WTC11 (cell line): ENCODE measurements at regions of chr2 and their contacts with region 1.

Region 1: DNA sequence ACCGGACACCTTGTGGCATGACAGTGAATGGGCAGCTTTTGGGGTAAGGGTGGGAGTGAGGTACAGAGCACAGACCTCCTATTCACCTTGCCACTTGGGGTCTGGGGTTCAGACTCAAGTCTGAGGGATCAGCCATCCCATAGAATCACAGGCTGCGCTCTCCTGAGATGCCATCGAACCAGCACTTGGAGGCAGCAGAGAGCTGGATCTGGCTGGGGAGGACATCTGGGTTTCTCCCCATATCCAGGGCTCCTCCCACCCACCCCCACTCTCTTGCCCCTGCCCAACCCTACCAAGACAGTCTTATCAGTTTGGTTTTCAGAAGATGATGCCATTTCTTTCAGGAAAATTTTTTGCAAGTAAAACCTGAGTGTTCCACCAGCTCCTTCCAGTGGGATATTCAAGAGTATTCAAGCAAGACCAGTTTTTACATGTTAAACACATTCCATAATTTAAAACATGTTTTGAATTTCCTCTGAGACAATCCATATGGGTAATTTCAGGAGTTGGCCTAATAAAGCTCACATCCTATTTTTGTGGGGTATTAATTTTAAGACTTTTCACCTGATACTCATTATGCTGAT is 29.2 kb upstream of the TEX44 start:
- DNase-seq: peak; percentile 82
- ATAC-seq: peak; percentile 99
- H3K4me3 Mint-ChIP-seq: no peak overlapping the region
- H3K27ac Mint-ChIP-seq: peak overlapping the region; percentile 66; the same call in 1 of the 2 replicates
- H3K4me1 Mint-ChIP-seq: peaks cover 11% of the 10 kb centered on the region
- H3K27me3 Mint-ChIP-seq: no peaks in the 10 kb centered on the region
- CTCF ChIP-seq: peak; percentile 54; the same call in 1 of the 2 replicates

Region 2: DNA sequence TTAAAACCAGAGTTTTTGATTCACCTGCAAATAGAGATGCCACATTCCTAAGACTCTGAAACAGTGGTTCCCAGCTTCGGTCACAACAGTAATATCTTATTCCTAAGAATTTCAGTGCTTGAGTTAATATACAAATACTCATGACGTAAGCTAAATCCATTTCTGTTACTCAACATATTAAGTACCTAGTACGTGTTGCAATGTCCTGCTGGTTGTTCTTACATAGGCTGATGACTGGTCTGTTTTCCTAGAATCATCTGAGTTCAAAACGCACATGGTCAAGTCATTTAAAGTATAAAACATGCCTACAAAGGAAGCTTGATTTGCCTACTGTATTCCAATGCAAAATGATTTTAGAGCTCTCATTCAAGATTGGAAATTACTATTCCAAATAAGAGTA is 106.4 kb before region 1 on chr2:
- CTCF ChIA-PET with region 1: no interaction called
- POLR2A ChIA-PET with region 1: no interaction called
- DNase-seq: no peak
- ATAC-seq: no peak
- H3K4me3 Mint-ChIP-seq: no peak overlapping the region
- H3K27ac Mint-ChIP-seq: peak overlapping the region; percentile 59; the same call in 1 of the 2 replicates
- H3K4me1 Mint-ChIP-seq: peaks cover 64% of the 10 kb centered on the region
- H3K27me3 Mint-ChIP-seq: no peaks in the 10 kb centered on the region
- CTCF ChIP-seq: no peak

Region 3: DNA sequence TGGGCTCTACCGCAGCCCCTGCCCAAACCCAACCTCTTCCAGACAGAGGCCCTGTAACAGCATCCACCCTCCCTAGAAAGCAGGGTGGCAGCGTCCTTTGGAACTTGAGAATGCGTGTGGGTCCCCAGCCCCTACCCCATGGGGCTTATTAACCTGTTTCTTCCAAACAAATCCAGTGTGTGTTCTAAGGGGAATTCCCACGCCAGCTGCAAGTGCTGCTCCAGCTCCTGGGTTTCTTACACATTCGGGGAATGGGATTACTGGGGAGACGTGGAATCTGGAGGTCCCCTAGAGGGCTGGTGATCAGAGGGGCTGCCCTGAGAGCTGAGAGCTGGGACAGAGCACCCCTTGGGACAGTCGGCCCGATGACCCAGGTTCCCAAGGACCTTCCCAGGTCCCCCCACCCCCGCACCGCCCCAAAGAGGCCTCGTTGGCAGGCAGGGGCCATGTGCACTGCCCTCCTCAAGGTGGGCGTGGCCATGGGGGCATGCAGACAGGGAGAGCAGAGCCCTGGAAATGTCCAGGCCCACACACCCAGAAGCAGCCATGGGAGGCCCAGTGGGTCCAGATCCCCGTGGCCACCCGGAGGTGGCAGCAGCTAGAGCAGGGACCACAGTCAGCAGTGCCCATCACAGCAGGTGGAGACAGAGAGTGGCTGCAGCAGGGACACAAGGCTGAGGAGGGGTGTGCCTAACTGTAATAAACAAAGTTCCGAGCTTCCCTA is 10.4 kb after region 1 on chr2:
- CTCF ChIA-PET with region 1: interaction called, 18 read pairs
- POLR2A ChIA-PET with region 1: interaction called, 3 read pairs
- DNase-seq: no peak
- ATAC-seq: peak; percentile 11
- H3K4me3 Mint-ChIP-seq: no peak overlapping the region
- H3K27ac Mint-ChIP-seq: peak overlapping the region; percentile 88
- H3K4me1 Mint-ChIP-seq: peaks cover 60% of the 10 kb centered on the region
- H3K27me3 Mint-ChIP-seq: no peaks in the 10 kb centered on the region
- CTCF ChIP-seq: no peak